CD8-positive, alpha-beta T cell (primary cell): ENCODE measurements at regions of chr5 and their contacts with region 1.

Region 1: GRCh38 chr5:139262742-139263445 is 30.6 kb upstream of the MATR3 start:
- DNase-seq: peak; percentile 37 to 80 (median 65)
- ATAC-seq: peak; percentile 99
- H3K4me3 ChIP-seq: no peak overlapping the region
- H3K4me3 Mint-ChIP-seq: no peak overlapping the region
- H3K27ac ChIP-seq: no peak overlapping the region
- H3K27ac Mint-ChIP-seq: no peak overlapping the region
- H3K4me1 ChIP-seq: peaks cover 13% of the 10 kb centered on the region
- H3K4me1 Mint-ChIP-seq: peaks cover 15% of the 10 kb centered on the region
- H3K27me3 ChIP-seq: no peaks in the 10 kb centered on the region
- H3K27me3 Mint-ChIP-seq: peaks cover 3% of the 10 kb centered on the region
- CTCF ChIP-seq: peak; percentile 56

Region 2: DNA sequence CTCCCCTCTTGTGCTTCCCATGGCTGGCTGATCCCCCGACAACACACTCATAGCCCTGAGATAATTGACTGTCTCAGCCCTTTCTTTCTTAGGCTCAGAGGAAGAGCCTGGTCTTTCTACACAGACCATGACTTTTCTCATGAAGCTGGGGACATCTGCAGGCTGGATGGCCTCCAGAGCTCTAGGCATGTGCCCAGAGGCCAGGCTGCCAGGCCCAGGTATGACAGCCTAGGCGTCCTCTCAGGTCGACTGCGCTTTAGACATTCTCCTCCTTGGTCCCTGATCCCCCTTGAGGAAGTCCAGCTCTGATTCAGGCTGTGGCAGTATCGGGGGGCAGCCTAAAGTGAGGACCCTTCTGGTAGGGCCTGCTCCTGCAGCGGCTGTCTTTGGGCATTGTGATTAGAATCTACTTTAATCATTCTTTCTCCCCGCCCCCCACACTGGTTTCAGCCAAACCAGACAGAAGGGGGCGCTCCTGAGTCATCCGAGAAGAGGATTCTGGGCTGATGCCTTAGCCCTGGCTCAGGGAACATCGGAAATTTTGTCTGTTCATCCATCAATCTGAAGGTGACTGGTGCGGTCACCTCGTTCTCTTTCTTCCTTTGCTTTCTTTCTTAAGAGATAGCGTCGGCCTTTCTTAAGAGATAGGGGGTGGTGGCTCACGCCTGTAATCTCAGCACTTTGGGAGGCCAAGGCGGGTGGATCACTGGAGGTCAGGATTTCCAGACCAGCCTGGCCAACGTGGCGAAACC is 621.2 kb before region 1 on chr5:
- CTCF ChIA-PET with region 1: interaction called, 4 read pairs
- POLR2A ChIA-PET with region 1: no interaction called
- intact Hi-C with region 1: loop called (anchors 2 kb)
- DNase-seq: peak; percentile 28 to 76 (median 68)
- ATAC-seq: peak; percentile 54
- H3K4me3 ChIP-seq: no peak overlapping the region
- H3K4me3 Mint-ChIP-seq: no peak overlapping the region
- H3K27ac ChIP-seq: no peak overlapping the region
- H3K27ac Mint-ChIP-seq: no peak overlapping the region
- H3K4me1 ChIP-seq: no peaks in the 10 kb centered on the region
- H3K4me1 Mint-ChIP-seq: no peaks in the 10 kb centered on the region
- H3K27me3 ChIP-seq: peaks cover 25 to 39% of the 10 kb centered on the region in 2 experiments
- H3K27me3 Mint-ChIP-seq: peaks cover 76% of the 10 kb centered on the region
- CTCF ChIP-seq: peak; percentile 57

Region 3: GRCh38 chr5:138824924-138825863 is 437.7 kb before region 1 on chr5:
- CTCF ChIA-PET with region 1: interaction called, 28 read pairs
- POLR2A ChIA-PET with region 1: no interaction called
- intact Hi-C with region 1: loop called in 1 of 2 experiments (anchors 2 kb)
- DNase-seq: peak in 2 of 9 experiments; percentile 6 to 30
- ATAC-seq: no peak
- H3K4me3 ChIP-seq: no peak overlapping the region
- H3K4me3 Mint-ChIP-seq: no peak overlapping the region
- H3K27ac ChIP-seq: no peak overlapping the region
- H3K27ac Mint-ChIP-seq: no peak overlapping the region
- H3K4me1 ChIP-seq: no peaks in the 10 kb centered on the region
- H3K4me1 Mint-ChIP-seq: no peaks in the 10 kb centered on the region
- H3K27me3 ChIP-seq: no peaks in the 10 kb centered on the region
- H3K27me3 Mint-ChIP-seq: peaks cover 12% of the 10 kb centered on the region
- CTCF ChIP-seq: peak; percentile 91

Region 4: DNA sequence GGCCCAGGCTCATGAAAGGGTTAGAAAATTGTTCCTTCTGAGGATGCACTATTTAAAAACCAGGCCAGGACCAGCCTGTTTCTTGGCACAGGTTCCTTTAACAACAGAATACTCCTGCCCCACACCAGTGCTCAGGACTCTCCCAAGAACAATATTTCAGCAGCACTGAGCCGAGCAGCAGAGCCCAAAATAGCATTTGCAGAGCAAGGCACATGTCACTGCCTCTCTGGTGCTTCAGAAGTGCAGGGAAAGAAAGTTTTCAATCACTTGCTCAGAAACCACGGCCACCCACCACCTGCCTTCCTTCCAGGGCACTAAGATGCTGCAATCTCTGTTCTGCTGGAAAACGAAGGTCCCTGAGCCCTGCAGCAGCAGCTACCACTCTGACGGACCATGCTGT is 142.4 kb before region 1 on chr5:
- CTCF ChIA-PET with region 1: no interaction called
- POLR2A ChIA-PET with region 1: no interaction called
- intact Hi-C with region 1: no loop called
- DNase-seq: no peak
- ATAC-seq: no peak
- H3K4me3 ChIP-seq: no peak overlapping the region
- H3K4me3 Mint-ChIP-seq: no peak overlapping the region
- H3K27ac ChIP-seq: no peak overlapping the region
- H3K27ac Mint-ChIP-seq: no peak overlapping the region
- H3K4me1 ChIP-seq: no peaks in the 10 kb centered on the region
- H3K4me1 Mint-ChIP-seq: no peaks in the 10 kb centered on the region
- H3K27me3 ChIP-seq: no peaks in the 10 kb centered on the region
- H3K27me3 Mint-ChIP-seq: no peaks in the 10 kb centered on the region
- CTCF ChIP-seq: no peak

Region 5: DNA sequence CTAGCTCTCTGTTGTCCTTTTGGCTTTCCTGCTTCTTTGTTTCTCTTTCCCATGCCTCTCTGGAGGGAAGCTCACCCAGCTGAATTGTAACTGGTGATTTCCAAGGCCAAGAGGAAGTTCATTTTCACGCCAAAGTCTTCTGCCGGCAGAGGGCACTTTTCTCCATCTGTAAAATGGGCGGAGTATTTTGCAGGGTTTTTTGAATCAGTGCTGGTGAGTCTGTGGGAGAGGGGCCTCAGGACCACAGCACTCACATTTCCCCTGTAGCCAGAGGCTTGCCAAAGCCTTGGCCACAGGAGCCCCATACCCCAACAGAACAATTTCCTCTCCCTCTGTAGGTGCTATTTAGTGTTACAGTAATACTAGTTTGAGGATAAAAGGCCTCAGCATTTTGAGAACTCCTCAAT is 11.6 kb before region 1 on chr5:
- CTCF ChIA-PET with region 1: interaction called, 14 read pairs
- POLR2A ChIA-PET with region 1: no interaction called
- intact Hi-C with region 1: no loop called
- DNase-seq: peak in 6 of 9 experiments; percentile 14 to 67 (median 48)
- ATAC-seq: no peak
- H3K4me3 ChIP-seq: no peak overlapping the region
- H3K4me3 Mint-ChIP-seq: no peak overlapping the region
- H3K27ac ChIP-seq: no peak overlapping the region
- H3K27ac Mint-ChIP-seq: no peak overlapping the region
- H3K4me1 ChIP-seq: no peaks in the 10 kb centered on the region
- H3K4me1 Mint-ChIP-seq: peaks cover 9% of the 10 kb centered on the region
- H3K27me3 ChIP-seq: no peaks in the 10 kb centered on the region
- H3K27me3 Mint-ChIP-seq: no peaks in the 10 kb centered on the region
- CTCF ChIP-seq: no peak